B cell (primary cell): ENCODE measurements at regions of chr11 and their contacts with region 1.

Region 1: GRCh38 chr11:105081412-105082087 is 36.4 kb upstream of the CARD16 start:
- DNase-seq: no peak
- ATAC-seq: no peak
- H3K4me3 ChIP-seq: no peak overlapping the region
- H3K4me3 Mint-ChIP-seq: no peak overlapping the region
- H3K27ac ChIP-seq: no peak overlapping the region
- H3K27ac Mint-ChIP-seq: no peak overlapping the region
- H3K4me1 ChIP-seq: peaks cover 0 to 9% of the 10 kb centered on the region in 2 donors
- H3K4me1 Mint-ChIP-seq: peaks cover 11% of the 10 kb centered on the region
- H3K27me3 ChIP-seq: peaks cover 0 to 12% (median 0%) of the 10 kb centered on the region in 4 experiments
- H3K27me3 Mint-ChIP-seq: peaks cover 31% of the 10 kb centered on the region
- CTCF ChIP-seq: no peak

Region 2: GRCh38 chr11:104803776-104804175 is 277.8 kb before region 1 on chr11:
- CTCF ChIA-PET with region 1: no interaction called
- POLR2A ChIA-PET with region 1: no interaction called
- intact Hi-C with region 1: no loop called
- DNase-seq: no peak
- ATAC-seq: no peak
- H3K4me3 ChIP-seq: no peak overlapping the region
- H3K4me3 Mint-ChIP-seq: no peak overlapping the region
- H3K27ac ChIP-seq: no peak overlapping the region
- H3K27ac Mint-ChIP-seq: no peak overlapping the region
- H3K4me1 ChIP-seq: peaks cover 9 to 12% of the 10 kb centered on the region in 2 donors
- H3K4me1 Mint-ChIP-seq: peaks cover 19% of the 10 kb centered on the region
- H3K27me3 ChIP-seq: no peaks in the 10 kb centered on the region
- H3K27me3 Mint-ChIP-seq: no peaks in the 10 kb centered on the region
- CTCF ChIP-seq: no peak

Region 3: DNA sequence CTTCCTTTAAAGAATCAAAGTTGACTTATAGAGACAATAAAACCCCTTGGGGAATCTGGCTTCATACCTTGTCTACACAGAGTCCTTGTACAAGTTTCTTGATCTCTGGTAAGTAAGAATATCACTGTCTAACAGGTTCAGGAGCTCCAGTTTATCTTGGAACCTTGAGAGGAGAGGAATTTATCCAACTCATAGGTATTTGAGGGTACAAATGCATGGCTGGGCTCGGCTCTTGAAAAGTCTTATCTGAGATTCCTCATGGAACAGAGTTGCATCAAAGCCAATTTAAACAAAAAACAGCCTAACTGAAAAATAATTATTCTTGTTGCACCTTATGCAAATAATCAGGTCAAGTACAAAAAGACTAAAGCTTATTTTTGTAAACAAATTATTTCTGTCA is 24.6 kb after region 1 on chr11:
- CTCF ChIA-PET with region 1: no interaction called
- POLR2A ChIA-PET with region 1: no interaction called
- intact Hi-C with region 1: loop called (anchors 1 kb)
- DNase-seq: no peak
- ATAC-seq: no peak
- H3K4me3 ChIP-seq: no peak overlapping the region
- H3K4me3 Mint-ChIP-seq: no peak overlapping the region
- H3K27ac ChIP-seq: no peak overlapping the region
- H3K27ac Mint-ChIP-seq: no peak overlapping the region
- H3K4me1 ChIP-seq: peaks cover 0 to 3% of the 10 kb centered on the region in 2 donors
- H3K4me1 Mint-ChIP-seq: peaks cover 13% of the 10 kb centered on the region
- H3K27me3 ChIP-seq: peaks cover 0 to 3% (median 0%) of the 10 kb centered on the region in 4 experiments
- H3K27me3 Mint-ChIP-seq: peaks cover 18% of the 10 kb centered on the region
- CTCF ChIP-seq: no peak